ENCODE measurements at regions of chr18 and their contacts with region 1.

Region 1: GRCh38 chr18:48806551-48807261 is 144.1 kb downstream of the SMAD7 start:
- DNase-seq: no peak

Region 2: GRCh38 chr18:48875942-48876511 is 69.3 kb after region 1 on chr18:
- in situ Hi-C with region 1: loop called (anchors 5 kb)
- DNase-seq: no peak

Measured in G401 (cell line).